Aorta (tissue), 5 donors: ENCODE measurements at regions of chr2 and their contacts with region 1.

Region 1: DNA sequence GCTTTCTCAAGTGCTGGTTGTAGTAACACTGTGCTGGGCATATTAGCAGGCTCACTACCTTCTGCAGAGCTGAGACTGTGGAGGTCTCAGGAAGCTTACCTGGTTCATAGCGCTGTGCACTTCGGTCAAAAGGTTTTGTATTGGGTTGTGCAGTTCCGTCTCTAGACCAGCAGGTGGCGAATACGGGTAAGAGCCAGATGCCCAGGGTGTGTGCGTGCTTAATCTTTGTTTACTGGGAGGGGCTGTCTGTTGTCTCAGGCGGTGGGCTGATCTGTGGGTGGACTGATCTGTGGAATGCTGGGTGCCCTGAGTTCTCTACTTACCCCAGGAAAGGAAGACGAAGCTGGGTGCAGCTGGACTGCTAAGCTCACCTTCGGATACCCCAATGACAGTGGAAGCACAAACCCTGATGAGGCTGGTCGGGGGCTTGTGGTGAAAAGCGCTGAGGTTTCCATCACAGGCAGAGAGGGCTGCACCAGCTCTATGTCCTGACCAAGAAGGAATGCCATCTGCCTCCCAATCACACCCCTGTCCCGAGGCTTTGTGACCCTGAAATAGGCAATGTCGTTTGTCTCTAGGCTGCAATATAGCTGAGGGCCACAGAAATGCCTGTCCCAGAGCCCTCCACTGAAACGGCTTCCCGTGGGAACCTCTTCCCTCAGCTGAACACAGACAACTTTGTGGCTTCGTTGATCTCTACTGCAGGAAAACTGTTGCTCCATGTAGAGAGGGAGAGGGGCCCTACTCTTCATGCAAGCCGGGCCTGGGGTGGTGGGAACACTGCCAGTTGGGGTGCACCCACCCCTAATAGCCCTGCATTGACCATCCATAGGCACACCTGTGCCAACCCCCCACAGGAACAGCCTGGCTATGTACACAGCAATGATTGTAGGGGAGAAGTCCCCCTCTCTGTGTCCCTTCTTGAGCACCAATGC is 45.9 kb upstream of the FAM117B start:
- DNase-seq: peak; percentile 73 to 80
- ATAC-seq: peak; percentile 88
- H3K4me3 ChIP-seq: no peak overlapping the region
- H3K27ac ChIP-seq: no peak overlapping the region
- H3K4me1 ChIP-seq: no peaks in the 10 kb centered on the region
- H3K27me3 ChIP-seq: no peaks in the 10 kb centered on the region

Region 2: DNA sequence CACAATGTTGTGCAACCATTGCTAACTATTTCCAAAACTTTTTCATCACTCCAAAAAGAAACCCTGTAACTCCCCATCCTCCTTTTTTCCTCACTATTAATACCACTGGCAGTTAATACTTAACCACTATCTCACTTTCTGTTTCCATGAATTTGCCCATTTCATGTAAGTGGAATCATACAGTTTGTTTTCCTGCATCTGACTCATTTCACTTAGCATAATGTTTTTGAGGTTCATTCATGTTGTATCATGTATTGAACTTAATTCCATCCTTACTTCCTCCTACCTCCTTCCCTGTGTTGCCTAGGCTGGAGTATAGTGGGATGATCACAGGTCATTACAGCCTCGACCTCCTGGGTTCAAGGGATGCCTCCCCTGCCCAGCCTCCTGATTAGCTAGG is 114.2 kb after region 1 on chr2:
- intact Hi-C with region 1: no loop called
- DNase-seq: no peak
- ATAC-seq: no peak
- H3K4me3 ChIP-seq: no peak overlapping the region
- H3K27ac ChIP-seq: no peak overlapping the region
- H3K4me1 ChIP-seq: no peaks in the 10 kb centered on the region
- H3K27me3 ChIP-seq: no peaks in the 10 kb centered on the region

Region 3: DNA sequence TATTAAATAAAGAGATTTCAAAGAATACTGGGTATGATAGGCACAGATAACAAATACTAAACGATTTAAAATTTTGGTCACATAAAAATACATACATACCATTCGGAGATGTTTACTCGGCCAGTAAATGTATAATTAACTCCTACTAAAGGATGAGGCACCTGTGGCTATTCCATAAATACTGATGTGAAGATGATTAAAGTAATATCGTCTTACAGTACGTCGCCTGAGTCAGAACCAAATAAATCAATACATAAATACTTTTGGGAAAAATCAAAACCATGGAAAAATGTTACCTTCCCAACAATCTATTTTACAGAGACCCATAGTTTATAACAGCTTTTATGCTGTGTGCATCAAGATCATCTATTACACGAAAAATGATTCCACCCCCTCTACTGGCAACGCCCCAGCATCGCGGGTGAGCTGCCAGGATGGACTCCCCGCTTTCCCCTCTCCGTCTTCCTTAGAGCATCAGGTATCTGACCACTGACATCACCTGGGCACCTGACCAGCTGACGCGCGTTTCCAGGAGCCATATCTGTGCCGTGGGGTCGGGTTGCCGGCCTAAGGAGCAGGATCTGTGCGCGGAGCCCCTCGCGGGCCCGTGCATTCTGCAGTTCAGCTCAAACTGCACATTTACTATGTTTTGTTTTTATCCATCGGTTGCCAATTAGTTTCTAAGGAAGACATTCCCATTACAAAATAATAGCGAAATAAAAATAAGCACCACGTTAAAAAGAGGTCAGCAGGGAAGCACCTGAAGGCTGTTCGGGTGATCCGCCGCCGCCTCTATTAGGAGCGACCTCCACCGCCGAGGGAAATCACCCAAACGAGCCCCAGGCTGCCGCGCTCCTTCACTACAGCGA is 281.8 kb after region 1 on chr2:
- intact Hi-C with region 1: loop called (anchors 2 to 10 kb)
- DNase-seq: peak; percentile 70 to 84
- ATAC-seq: peak; percentile 82
- H3K4me3 ChIP-seq: peak overlapping the region; percentile 68 to 75
- H3K27ac ChIP-seq: peak overlapping the region in 1 of 2 donors; percentile 10
- H3K4me1 ChIP-seq: no peaks in the 10 kb centered on the region
- H3K27me3 ChIP-seq: no peaks in the 10 kb centered on the region